ENCODE measurements at regions of chr16 and their contacts with region 1.

Region 1: GRCh38 chr16:68064791-68065365 is 20.3 kb upstream of the NFATC3 start:
- DNase-seq: peak; percentile 77
- H3K4me3 ChIP-seq: no peak overlapping the region
- H3K27ac ChIP-seq: no peak overlapping the region
- H3K4me1 ChIP-seq: peaks cover 19% of the 10 kb centered on the region
- H3K27me3 ChIP-seq: no peaks in the 10 kb centered on the region
- CTCF ChIP-seq: peak; percentile 80 to 83
- POLR2A ChIP-seq: no peak

Region 2: DNA sequence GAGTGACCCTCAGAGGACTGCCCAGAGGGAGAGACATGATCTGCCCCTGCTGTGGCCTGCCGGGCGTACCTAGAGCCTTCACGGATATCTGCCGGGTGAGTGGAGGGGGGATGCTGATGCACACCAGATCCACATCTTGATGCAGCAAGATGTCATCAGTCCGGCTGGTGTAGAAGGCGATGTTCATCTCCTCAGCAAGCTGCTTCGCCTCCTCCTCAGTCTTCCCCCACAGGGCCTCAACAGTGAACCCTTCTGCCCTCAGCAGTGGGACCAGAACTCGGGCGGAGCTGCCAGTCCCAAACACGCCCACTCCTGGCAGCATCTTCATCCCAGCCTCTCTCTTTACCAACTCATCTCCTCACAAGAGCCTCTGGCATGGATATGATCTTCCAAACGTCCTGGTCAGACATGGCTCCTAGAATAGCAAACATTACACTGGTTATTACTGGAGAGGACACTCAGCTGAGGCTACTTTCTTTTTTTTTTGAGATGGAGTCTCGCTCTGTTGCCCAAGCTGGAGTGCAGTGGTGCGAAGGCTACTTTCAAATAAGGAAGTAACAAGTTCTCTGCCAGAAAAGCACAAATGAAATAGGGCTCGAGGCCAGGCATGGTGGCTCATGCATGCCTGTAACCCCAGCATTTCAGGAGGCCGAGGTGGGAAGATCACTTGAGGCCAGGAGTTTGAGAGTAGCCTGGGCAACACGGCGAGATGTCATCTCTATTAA is 379.3 kb before region 1 on chr16:
- CTCF ChIA-PET with region 1: no interaction called
- POLR2A ChIA-PET with region 1: no interaction called
- dilution Hi-C with region 1: no loop called
- intact Hi-C with region 1: no loop called
- DNase-seq: no peak
- H3K4me3 ChIP-seq: no peak overlapping the region
- H3K27ac ChIP-seq: no peak overlapping the region
- H3K4me1 ChIP-seq: peaks cover 9% of the 10 kb centered on the region
- H3K27me3 ChIP-seq: no peaks in the 10 kb centered on the region
- CTCF ChIP-seq: no peak
- POLR2A ChIP-seq: no peak

Region 3: GRCh38 chr16:67993189-67994039 is 71.5 kb before region 1 on chr16:
- CTCF ChIA-PET with region 1: interaction called, 6 read pairs
- POLR2A ChIA-PET with region 1: no interaction called
- dilution Hi-C with region 1: no loop called
- intact Hi-C with region 1: loop called (anchors 1 kb)
- DNase-seq: peak; percentile 71
- H3K4me3 ChIP-seq: no peak overlapping the region
- H3K27ac ChIP-seq: peak overlapping the region; percentile 9
- H3K4me1 ChIP-seq: peaks cover 4% of the 10 kb centered on the region
- H3K27me3 ChIP-seq: no peaks in the 10 kb centered on the region
- CTCF ChIP-seq: peak; percentile 99
- POLR2A ChIP-seq: no peak

Region 4: GRCh38 chr16:68074850-68075555 is 10.1 kb after region 1 on chr16:
- CTCF ChIA-PET with region 1: interaction called, 14 read pairs
- POLR2A ChIA-PET with region 1: no interaction called
- dilution Hi-C with region 1: no loop called
- intact Hi-C with region 1: no loop called
- DNase-seq: no peak
- H3K4me3 ChIP-seq: no peak overlapping the region
- H3K27ac ChIP-seq: no peak overlapping the region
- H3K4me1 ChIP-seq: peaks cover 13% of the 10 kb centered on the region
- H3K27me3 ChIP-seq: no peaks in the 10 kb centered on the region
- CTCF ChIP-seq: no peak
- POLR2A ChIP-seq: no peak